Naive thymus-derived CD4-positive, alpha-beta T cell (primary cell): ENCODE measurements at regions of chr10 and their contacts with region 1.

Region 1: DNA sequence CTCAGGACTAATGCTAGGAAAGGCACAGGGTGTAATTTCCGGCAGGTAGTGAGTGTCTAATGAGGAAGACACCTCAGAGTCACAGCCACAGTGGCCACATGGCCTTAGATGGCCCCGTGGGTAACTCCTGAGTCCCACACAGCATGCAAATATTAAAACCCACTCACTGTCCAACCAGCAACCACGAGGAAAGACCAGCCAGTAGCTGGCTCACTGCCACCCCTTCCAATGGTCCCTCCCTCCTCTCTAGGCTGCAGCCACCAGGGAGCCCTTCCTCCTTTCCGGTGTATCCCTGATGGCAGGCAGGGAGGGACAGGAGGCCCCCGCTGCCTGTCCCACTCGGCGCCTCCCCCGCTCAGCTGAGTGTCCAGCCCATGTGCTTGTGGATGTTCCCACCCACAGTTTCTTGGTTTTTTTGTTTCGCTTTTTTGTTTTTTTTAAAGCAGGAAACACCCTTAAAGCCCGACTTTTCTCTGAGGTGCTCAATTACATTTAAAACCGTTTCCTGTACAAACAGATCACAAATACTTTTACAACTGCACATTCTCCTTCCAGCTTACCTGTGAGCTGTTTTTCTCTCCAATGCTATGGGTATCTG is 9.2 kb downstream of the BNIP3 start:
- DNase-seq: peak in 8 of 9 donors; percentile 44 to 75 (median 68)
- ATAC-seq: peak; percentile 71
- H3K4me3 ChIP-seq: peak overlapping the region; percentile 50
- H3K4me3 Mint-ChIP-seq: peak overlapping the region; percentile 81 to 95 (median 88)
- H3K27ac ChIP-seq: peak overlapping the region; percentile 67
- H3K27ac Mint-ChIP-seq: peak overlapping the region; percentile 89 to 97 (median 96)
- H3K4me1 ChIP-seq: peaks cover 21 to 60% of the 10 kb centered on the region in 2 donors
- H3K4me1 Mint-ChIP-seq: peaks cover 44 to 86% (median 83%) of the 10 kb centered on the region in 7 donors
- H3K27me3 ChIP-seq: no peaks in the 10 kb centered on the region
- H3K27me3 Mint-ChIP-seq: no peaks in the 10 kb centered on the region

Region 2: GRCh38 chr10:131900350-131901146 is 72.0 kb before region 1 on chr10 and contains the start of gene PPP2R2D:
- CTCF ChIA-PET with region 1: no interaction called
- POLR2A ChIA-PET with region 1: interaction called, 12 read pairs
- intact Hi-C with region 1: loop called (anchors 1 kb)
- DNase-seq: peak; percentile 95 to 99 (median 97)
- ATAC-seq: peak; percentile 90
- H3K4me3 ChIP-seq: peak within 1 kb of the TSS; percentile 64
- H3K4me3 Mint-ChIP-seq: peak within 1 kb of the TSS; percentile 90 to 95 (median 92)
- H3K27ac ChIP-seq: peak within 1 kb of the TSS; percentile 94
- H3K27ac Mint-ChIP-seq: peak within 1 kb of the TSS; percentile 86 to 97 (median 93)
- H3K4me1 ChIP-seq: peaks cover 34 to 40% of the 10 kb centered on the region in 2 donors
- H3K4me1 Mint-ChIP-seq: peaks cover 30 to 67% (median 61%) of the 10 kb centered on the region in 7 donors
- H3K27me3 ChIP-seq: no peaks in the 10 kb centered on the region
- H3K27me3 Mint-ChIP-seq: peaks cover 0 to 18% (median 0%) of the 10 kb centered on the region in 5 donors
- total RNA-seq, gene PPP2R2D: 37.1 to 61.3 (median 40.1) TPM

Region 3: DNA sequence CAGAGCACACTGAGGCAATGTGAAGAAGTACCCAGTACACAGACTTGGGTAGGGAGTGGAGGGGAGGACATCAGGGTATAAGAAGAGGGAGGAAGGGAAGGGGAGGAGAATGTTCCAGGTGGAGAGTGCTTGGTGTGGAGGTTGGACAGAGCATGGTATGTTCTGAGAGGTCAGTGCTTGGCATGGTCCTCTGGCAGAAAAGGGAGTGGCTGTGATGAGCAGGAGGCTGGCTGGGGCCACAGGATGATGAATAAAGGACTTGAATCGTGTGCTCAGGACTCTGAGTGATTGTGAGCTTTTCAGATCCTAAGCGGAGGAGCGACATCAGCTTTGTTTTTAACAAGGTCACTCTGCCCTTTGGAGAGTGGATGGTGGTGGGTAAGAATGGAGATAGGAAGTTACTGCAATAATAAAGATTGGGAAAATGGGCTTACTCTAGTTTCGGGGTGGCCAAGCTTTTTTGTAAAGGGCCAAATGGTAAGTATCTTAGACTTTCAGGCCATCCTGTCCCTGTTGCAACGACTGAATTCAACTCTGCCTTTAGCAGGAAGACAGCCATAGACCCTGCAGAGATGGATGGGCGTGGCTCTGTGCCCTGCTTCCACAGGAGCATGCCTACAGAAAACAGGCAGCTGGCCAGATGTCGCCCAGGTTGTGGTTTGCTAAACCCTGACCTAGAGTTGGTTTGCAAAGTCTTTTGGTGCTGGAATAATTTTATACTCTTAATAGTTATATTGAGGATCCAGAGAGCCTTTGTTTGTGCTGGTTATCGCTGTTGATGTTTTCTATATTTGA is 63.4 kb before region 1 on chr10:
- CTCF ChIA-PET with region 1: interaction called, 3 read pairs
- POLR2A ChIA-PET with region 1: interaction called, 5 read pairs
- intact Hi-C with region 1: loop called in 1 of 2 experiments (anchors 2 kb)
- DNase-seq: peak in 1 of 9 donors; percentile 6
- ATAC-seq: no peak
- H3K4me3 ChIP-seq: peak overlapping the region; percentile 25
- H3K4me3 Mint-ChIP-seq: peak overlapping the region; percentile 6 to 92 (median 84)
- H3K27ac ChIP-seq: peak overlapping the region; percentile 70
- H3K27ac Mint-ChIP-seq: peak overlapping the region; percentile 72 to 98 (median 92)
- H3K4me1 ChIP-seq: peaks cover 37 to 76% of the 10 kb centered on the region in 2 donors
- H3K4me1 Mint-ChIP-seq: peaks cover 62 to 98% (median 92%) of the 10 kb centered on the region in 7 donors
- H3K27me3 ChIP-seq: no peaks in the 10 kb centered on the region
- H3K27me3 Mint-ChIP-seq: no peaks in the 10 kb centered on the region

Region 4: GRCh38 chr10:131928248-131929095 is 44.1 kb before region 1 on chr10:
- CTCF ChIA-PET with region 1: no interaction called
- POLR2A ChIA-PET with region 1: interaction called, 3 read pairs
- intact Hi-C with region 1: loop called in 1 of 2 experiments (anchors 2 kb)
- DNase-seq: peak in 6 of 9 donors; percentile 24 to 68 (median 34)
- ATAC-seq: peak; percentile 85
- H3K4me3 ChIP-seq: no peak overlapping the region
- H3K4me3 Mint-ChIP-seq: peak overlapping the region; percentile 55 to 84 (median 78)
- H3K27ac ChIP-seq: peak overlapping the region; percentile 32
- H3K27ac Mint-ChIP-seq: peak overlapping the region; percentile 79 to 94 (median 86)
- H3K4me1 ChIP-seq: peaks cover 11 to 46% of the 10 kb centered on the region in 2 donors
- H3K4me1 Mint-ChIP-seq: peaks cover 53 to 97% (median 84%) of the 10 kb centered on the region in 7 donors
- H3K27me3 ChIP-seq: no peaks in the 10 kb centered on the region
- H3K27me3 Mint-ChIP-seq: no peaks in the 10 kb centered on the region

Region 5: DNA sequence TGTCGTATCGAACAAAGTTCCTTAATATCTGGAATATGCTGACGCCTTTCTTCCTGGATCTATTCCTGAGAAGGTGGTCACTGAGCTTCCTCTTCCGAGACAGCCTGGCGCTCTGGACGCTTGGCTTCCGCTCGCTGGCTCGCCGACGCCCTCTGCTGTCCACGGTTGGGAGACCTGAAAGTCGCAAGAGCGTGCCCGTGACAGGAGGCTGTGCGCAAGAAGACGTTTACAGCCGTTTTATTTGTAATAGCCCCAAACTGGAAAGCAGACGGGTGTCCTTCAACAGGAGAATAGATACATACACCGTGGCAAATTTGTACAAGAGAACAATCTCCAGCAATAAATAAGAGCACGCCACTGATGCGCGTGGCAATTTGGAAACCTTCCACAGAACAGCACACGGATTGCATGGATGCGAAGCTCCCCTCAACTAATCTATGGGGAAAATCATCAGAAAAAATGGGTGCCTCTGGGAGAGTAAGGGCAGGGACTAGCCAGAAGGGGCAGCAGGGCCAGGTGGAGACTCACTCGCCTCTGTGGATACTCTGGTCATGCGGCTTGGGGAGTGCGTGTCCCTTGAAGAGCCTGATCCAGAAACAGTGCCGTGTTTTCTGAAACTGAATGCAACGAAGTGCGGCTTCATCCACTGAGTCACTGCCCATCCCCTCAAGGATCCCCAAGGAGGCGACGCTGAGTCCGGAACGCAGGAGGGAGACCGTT is 50.7 kb after region 1 on chr10:
- CTCF ChIA-PET with region 1: interaction called, 23 read pairs
- POLR2A ChIA-PET with region 1: interaction called, 3 read pairs
- intact Hi-C with region 1: loop called in 1 of 2 experiments (anchors 2 kb)
- DNase-seq: peak; percentile 47 to 79 (median 70)
- ATAC-seq: peak; percentile 86
- H3K4me3 ChIP-seq: no peak overlapping the region
- H3K4me3 Mint-ChIP-seq: peak overlapping the region; percentile 14 to 75 (median 66)
- H3K27ac ChIP-seq: no peak overlapping the region
- H3K27ac Mint-ChIP-seq: peak overlapping the region in 3 of 9 donors; percentile 3 to 52 (median 8)
- H3K4me1 ChIP-seq: peaks cover 0 to 6% of the 10 kb centered on the region in 2 donors
- H3K4me1 Mint-ChIP-seq: peaks cover 5 to 16% (median 7%) of the 10 kb centered on the region in 7 donors
- H3K27me3 ChIP-seq: no peaks in the 10 kb centered on the region
- H3K27me3 Mint-ChIP-seq: peaks cover 31 to 49% (median 36%) of the 10 kb centered on the region in 5 donors